ENCODE measurements at regions of chr6 and their contacts with region 1.

Region 1: GRCh38 chr6:56549014-56549413 is 93.7 kb downstream of the DST start:
- DNase-seq: no peak
- ATAC-seq: peak in 2 of 8 donors; percentile 52
- H3K4me3 ChIP-seq: no peak overlapping the region
- H3K27ac ChIP-seq: peak overlapping the region in 3 of 10 donors; percentile 0 to 17 (median 11)
- H3K4me1 ChIP-seq: peaks cover 0 to 67% (median 47%) of the 10 kb centered on the region in 9 donors
- H3K27me3 ChIP-seq: no peaks in the 10 kb centered on the region
- CTCF ChIP-seq: peak in 7 of 9 donors; percentile 25 to 62 (median 45)

Region 2: GRCh38 chr6:56364827-56365313 is 184.1 kb before region 1 on chr6:
- intact Hi-C with region 1: loop called in 3 of 10 experiments (anchors 5 kb)
- DNase-seq: no peak
- ATAC-seq: no peak
- H3K4me3 ChIP-seq: no peak overlapping the region
- H3K27ac ChIP-seq: peak overlapping the region in 1 of 10 donors; percentile 10
- H3K4me1 ChIP-seq: peaks cover 0 to 52% (median 35%) of the 10 kb centered on the region in 9 donors
- H3K27me3 ChIP-seq: no peaks in the 10 kb centered on the region
- CTCF ChIP-seq: no peak

Region 3: GRCh38 chr6:56406276-56407269 is 142.4 kb before region 1 on chr6:
- intact Hi-C with region 1: no loop called
- DNase-seq: no peak
- ATAC-seq: no peak
- H3K4me3 ChIP-seq: no peak overlapping the region
- H3K27ac ChIP-seq: no peak overlapping the region
- H3K4me1 ChIP-seq: peaks cover 0 to 26% (median 12%) of the 10 kb centered on the region in 9 donors
- H3K27me3 ChIP-seq: no peaks in the 10 kb centered on the region
- CTCF ChIP-seq: no peak

Region 4: GRCh38 chr6:56499095-56499494 is 49.9 kb before region 1 on chr6:
- intact Hi-C with region 1: loop called in 3 of 10 experiments (anchors 2 to 5 kb)
- DNase-seq: no peak
- ATAC-seq: peak in 1 of 8 donors; percentile 22
- H3K4me3 ChIP-seq: no peak overlapping the region
- H3K27ac ChIP-seq: peak overlapping the region in 4 of 10 donors; percentile 0 to 38 (median 10)
- H3K4me1 ChIP-seq: peaks cover 0 to 28% (median 6%) of the 10 kb centered on the region in 9 donors
- H3K27me3 ChIP-seq: no peaks in the 10 kb centered on the region
- CTCF ChIP-seq: no peak

Region 5: DNA sequence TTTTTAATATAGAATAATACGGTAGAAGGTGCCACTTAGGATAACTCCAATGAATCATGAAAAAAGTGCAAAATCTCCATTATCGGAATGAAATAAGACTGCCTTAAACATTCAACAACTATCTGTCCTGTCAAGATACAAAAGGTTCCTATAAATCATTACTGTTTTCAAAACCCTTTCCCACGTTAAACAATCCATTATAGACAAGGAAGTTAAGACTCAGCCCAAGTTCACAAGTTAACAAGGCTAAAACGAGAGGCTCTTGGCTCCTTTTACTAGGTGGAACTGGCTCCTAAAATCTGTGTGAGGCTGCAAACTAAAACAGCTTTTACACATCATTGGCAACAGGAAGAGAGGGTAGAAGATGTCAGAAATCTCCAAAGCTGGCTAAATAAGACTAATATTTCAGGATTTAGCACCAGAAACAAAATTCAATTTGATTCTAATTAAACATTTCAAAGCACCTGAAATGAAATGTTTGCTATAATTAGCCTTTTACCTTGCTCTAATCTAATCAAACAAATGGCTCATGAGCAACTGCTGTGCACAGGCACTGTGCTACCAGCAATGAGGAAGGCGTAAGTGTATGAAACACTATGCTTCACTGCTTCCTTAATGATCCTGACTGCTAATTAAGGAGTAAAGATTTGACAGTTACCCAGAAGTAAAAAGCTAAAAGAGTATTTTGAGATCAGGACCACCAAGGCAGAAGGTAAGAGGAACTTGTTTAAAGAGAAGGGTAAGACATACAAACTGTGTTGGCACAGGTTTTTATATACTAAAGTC is 16.1 kb before region 1 on chr6:
- intact Hi-C with region 1: no loop called
- DNase-seq: no peak
- ATAC-seq: no peak
- H3K4me3 ChIP-seq: no peak overlapping the region
- H3K27ac ChIP-seq: peak overlapping the region in 1 of 10 donors; percentile 13
- H3K4me1 ChIP-seq: peaks cover under 1 to 63% (median 28%) of the 10 kb centered on the region in 9 donors
- H3K27me3 ChIP-seq: no peaks in the 10 kb centered on the region
- CTCF ChIP-seq: no peak

Region 6: DNA sequence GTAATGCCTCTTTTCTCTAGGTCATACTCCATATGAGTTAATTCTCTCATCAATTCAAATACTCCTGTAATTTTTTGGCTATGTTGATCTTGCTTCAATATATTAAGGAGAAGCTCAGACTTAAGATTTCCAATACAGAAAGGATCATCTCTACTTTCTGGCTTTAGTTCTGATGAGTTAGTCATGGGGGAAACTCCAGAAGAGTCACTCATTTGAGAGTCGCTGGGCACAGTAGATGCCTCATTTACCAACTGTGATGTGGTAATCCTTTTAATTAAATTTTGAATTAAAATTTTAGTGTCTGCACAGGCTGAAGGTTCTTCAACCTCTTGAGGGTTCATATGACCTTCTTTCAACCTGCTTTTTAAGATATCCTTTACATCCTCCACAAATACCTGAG is 55.2 kb after region 1 on chr6:
- intact Hi-C with region 1: no loop called
- DNase-seq: no peak
- ATAC-seq: no peak
- H3K4me3 ChIP-seq: no peak overlapping the region
- H3K27ac ChIP-seq: no peak overlapping the region
- H3K4me1 ChIP-seq: no peaks in the 10 kb centered on the region
- H3K27me3 ChIP-seq: no peaks in the 10 kb centered on the region
- CTCF ChIP-seq: no peak

Measured in heart right ventricle (tissue), 16 donors.